ENCODE measurements at regions of chr4 and their contacts with region 1.

Region 1: DNA sequence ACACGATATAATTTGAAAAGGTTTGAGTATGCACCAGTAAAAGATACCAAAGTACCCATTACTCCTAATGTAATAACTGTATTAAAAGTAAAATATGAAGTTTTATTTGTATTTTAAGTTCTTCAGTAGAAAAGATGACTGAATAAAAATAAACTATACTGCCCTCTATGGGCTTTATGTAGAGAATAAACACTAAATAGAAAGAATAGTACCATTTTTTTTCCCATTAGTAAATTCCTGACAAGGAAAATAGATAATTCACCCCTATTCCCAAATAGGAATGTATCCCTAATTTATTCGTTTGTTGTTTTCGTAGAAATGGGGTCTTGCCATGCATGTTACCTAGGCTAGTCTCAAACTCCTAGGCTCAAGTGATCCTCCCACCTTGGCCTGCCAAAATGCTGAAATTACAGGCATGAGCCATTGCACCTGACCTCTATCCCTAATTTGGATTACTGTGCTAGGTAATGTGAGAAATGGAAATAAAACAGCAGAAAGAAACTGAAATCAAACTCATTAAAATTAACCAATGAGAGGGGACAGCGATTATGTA is 73.6 kb upstream of the COX18 start:
- DNase-seq: no peak
- ATAC-seq: no peak
- H3K4me3 ChIP-seq: no peak overlapping the region
- H3K4me3 Mint-ChIP-seq: no peak overlapping the region
- H3K27ac ChIP-seq: no peak overlapping the region
- H3K27ac Mint-ChIP-seq: no peak overlapping the region
- H3K4me1 ChIP-seq: no peaks in the 10 kb centered on the region
- H3K4me1 Mint-ChIP-seq: peaks cover 5% of the 10 kb centered on the region
- H3K27me3 ChIP-seq: no peaks in the 10 kb centered on the region
- H3K27me3 Mint-ChIP-seq: no peaks in the 10 kb centered on the region
- CTCF ChIP-seq: peak; percentile 38

Region 2: GRCh38 chr4:73193155-73193554 is 50.1 kb after region 1 on chr4:
- CTCF ChIA-PET with region 1: no interaction called
- POLR2A ChIA-PET with region 1: no interaction called
- intact Hi-C with region 1: loop called in 1 of 2 experiments (anchors 5 kb)
- DNase-seq: no peak
- ATAC-seq: no peak
- H3K4me3 ChIP-seq: no peak overlapping the region
- H3K4me3 Mint-ChIP-seq: no peak overlapping the region
- H3K27ac ChIP-seq: no peak overlapping the region
- H3K27ac Mint-ChIP-seq: no peak overlapping the region
- H3K4me1 ChIP-seq: no peaks in the 10 kb centered on the region
- H3K4me1 Mint-ChIP-seq: peaks cover 46% of the 10 kb centered on the region
- H3K27me3 ChIP-seq: no peaks in the 10 kb centered on the region
- H3K27me3 Mint-ChIP-seq: no peaks in the 10 kb centered on the region
- CTCF ChIP-seq: no peak

Measured in CD8-positive, alpha-beta T cell (primary cell).